RWPE1 (cell line): ENCODE measurements at regions of chr20 and their contacts with region 1.

Region 1: DNA sequence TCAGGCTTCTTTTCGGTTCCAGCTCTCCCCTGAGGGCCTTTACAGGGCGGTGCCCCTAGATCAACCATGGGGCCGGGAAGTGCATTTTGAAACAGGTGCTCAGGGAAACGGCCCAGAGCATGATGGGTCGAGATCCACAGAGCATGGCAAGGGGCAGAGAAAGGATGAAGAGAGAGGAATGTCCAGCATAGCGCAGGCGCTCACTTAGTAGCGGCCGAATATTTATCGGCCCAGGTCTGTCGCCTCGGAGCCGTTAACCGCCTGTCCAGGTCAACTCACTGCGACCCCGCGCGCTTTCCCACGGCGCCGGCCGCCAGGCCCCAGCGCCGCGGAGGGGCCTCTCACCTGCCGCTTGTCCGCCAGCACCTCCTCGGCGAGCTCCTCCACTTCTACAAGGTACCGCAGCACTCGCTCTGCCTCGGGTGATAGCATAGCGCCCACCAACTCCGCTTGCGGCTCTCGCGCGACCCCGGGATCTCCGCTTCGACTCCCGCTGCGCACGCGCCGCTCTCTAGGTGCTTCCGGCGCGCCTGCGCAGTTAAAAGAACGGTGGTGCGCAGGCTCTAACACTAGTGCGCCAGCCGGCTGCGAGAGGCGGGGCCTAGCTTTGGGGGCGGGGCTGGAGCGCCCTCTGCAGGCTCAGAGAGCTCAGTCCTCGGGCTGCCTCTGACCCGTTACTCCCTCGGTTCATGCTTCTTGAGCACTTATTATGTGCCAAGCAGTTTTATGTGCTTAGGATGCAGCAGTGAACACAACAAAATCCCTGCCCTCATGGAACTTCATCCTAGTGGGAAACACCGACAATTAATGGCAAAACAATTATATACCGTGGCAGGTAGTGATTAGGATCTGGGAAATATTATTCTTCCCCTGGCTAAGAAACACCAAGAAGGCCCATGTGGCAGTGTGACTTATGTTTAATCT is at the start of gene PDRG1:
- DNase-seq: peak; percentile 98
- H3K27ac ChIP-seq: peak within 1 kb of the TSS; percentile 61
- CTCF ChIP-seq: peak; percentile 100

Region 2: DNA sequence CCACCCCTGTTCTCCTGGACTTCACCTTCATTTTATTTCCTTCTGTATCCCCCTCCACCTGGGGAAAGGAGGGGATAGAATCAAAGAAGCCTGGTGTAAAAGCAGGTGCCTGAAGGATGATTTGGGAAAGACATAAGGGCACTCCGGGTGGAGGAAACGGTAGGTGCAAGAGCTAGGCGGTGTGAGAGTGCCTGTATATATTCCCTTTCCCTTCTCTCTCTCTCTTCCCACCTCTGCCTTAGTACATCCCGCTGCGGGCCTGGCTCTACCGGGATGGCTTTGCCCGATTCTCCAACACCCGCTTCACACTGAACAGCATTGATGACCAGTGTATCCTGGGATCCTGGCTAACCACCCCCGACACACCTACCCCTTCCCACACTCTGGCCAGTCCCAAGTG is 26.2 kb before region 1 on chr20:
- CTCF ChIA-PET with region 1: no interaction called
- POLR2A ChIA-PET with region 1: no interaction called
- DNase-seq: no peak
- H3K27ac ChIP-seq: no peak overlapping the region
- CTCF ChIP-seq: no peak

Region 3: GRCh38 chr20:31968291-31969126 is 16.7 kb after region 1 on chr20:
- CTCF ChIA-PET with region 1: interaction called, 11 read pairs
- POLR2A ChIA-PET with region 1: interaction called, 3 read pairs
- DNase-seq: peak; percentile 97
- H3K27ac ChIP-seq: no peak overlapping the region
- CTCF ChIP-seq: no peak

Region 4: GRCh38 chr20:31989030-31989645 is 37.3 kb after region 1 on chr20:
- CTCF ChIA-PET with region 1: no interaction called
- POLR2A ChIA-PET with region 1: no interaction called
- DNase-seq: no peak
- H3K27ac ChIP-seq: no peak overlapping the region
- CTCF ChIP-seq: no peak

Region 5: GRCh38 chr20:32004962-32005361 is 53.2 kb after region 1 on chr20:
- CTCF ChIA-PET with region 1: no interaction called
- POLR2A ChIA-PET with region 1: no interaction called
- DNase-seq: peak; percentile 39
- H3K27ac ChIP-seq: no peak overlapping the region
- CTCF ChIP-seq: no peak

Region 6: DNA sequence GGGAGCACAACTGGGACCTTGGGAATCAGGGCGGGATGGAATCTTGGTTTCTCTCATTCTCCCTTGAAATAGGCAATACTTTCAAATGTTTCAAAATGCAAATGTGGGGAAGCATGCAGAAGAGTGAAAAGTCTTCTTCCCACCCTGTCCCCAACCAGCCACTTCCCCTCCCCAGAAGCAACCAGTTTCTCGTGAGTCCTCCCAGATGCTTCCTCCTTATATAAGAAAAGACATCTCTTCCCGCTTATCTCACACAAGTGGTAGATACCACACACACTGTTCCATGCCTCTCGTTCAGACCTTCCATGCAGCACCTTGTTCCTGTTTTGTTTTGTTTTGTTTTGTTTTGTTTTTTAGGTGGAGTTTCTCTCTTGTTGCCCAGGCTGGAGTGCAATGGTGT is 125.4 kb after region 1 on chr20:
- CTCF ChIA-PET with region 1: no interaction called
- POLR2A ChIA-PET with region 1: no interaction called
- DNase-seq: no peak
- H3K27ac ChIP-seq: no peak overlapping the region
- CTCF ChIP-seq: no peak